Sigmoid colon (tissue), 7 donors: ENCODE measurements at regions of chr7 and their contacts with region 1.

Region 1: GRCh38 chr7:77415823-77416622 is at the start of gene GSAP:
- DNase-seq: peak; percentile 78
- H3K4me3 ChIP-seq: peak within 1 kb of the TSS; percentile 73 to 91 (median 78)
- H3K27ac ChIP-seq: peak within 1 kb of the TSS; percentile 83 to 88 (median 86)
- H3K4me1 ChIP-seq: peaks cover 0 to 13% (median 4%) of the 10 kb centered on the region in 4 donors
- H3K27me3 ChIP-seq: no peaks in the 10 kb centered on the region
- CTCF ChIP-seq: no peak
- EP300 ChIP-seq: no peak
- POLR2A ChIP-seq: no peak
- total RNA-seq, gene GSAP: 15.1 to 30.2 (median 22.1) TPM

Region 2: GRCh38 chr7:77348371-77348813 is 67.6 kb before region 1 on chr7:
- intact Hi-C with region 1: loop called (anchors 5 kb)
- DNase-seq: peak; percentile 78
- H3K4me3 ChIP-seq: no peak overlapping the region
- H3K27ac ChIP-seq: peak overlapping the region; percentile 70 to 80 (median 78)
- H3K4me1 ChIP-seq: peaks cover 0 to 61% (median 35%) of the 10 kb centered on the region in 4 donors
- H3K27me3 ChIP-seq: no peaks in the 10 kb centered on the region
- CTCF ChIP-seq: no peak
- EP300 ChIP-seq: peak in 2 of 4 donors; percentile 58 to 80
- POLR2A ChIP-seq: no peak

Region 3: GRCh38 chr7:77536413-77537135 is 120.6 kb after region 1 on chr7:
- intact Hi-C with region 1: loop called (anchors 2 kb)
- DNase-seq: peak; percentile 98
- H3K4me3 ChIP-seq: peak overlapping the region; percentile 65 to 95 (median 80)
- H3K27ac ChIP-seq: peak overlapping the region; percentile 93 to 98 (median 96)
- H3K4me1 ChIP-seq: peaks cover 0 to 33% (median 25%) of the 10 kb centered on the region in 4 donors
- H3K27me3 ChIP-seq: no peaks in the 10 kb centered on the region
- CTCF ChIP-seq: no peak
- EP300 ChIP-seq: no peak
- POLR2A ChIP-seq: peak; percentile 86 to 96

Region 4: GRCh38 chr7:78111386-78111785 is 695.4 kb after region 1 on chr7:
- intact Hi-C with region 1: no loop called
- DNase-seq: no peak
- H3K4me3 ChIP-seq: no peak overlapping the region
- H3K27ac ChIP-seq: no peak overlapping the region
- H3K4me1 ChIP-seq: no peaks in the 10 kb centered on the region
- H3K27me3 ChIP-seq: no peaks in the 10 kb centered on the region
- CTCF ChIP-seq: no peak
- EP300 ChIP-seq: no peak
- POLR2A ChIP-seq: no peak